ENCODE measurements at regions of chr1 and their contacts with region 1.

Region 1: GRCh38 chr1:177928194-177928593 is 41.7 kb downstream of the SEC16B start:
- DNase-seq: no peak
- H3K4me3 ChIP-seq: no peak overlapping the region
- H3K27ac ChIP-seq: no peak overlapping the region
- H3K4me1 ChIP-seq: 0 out of 7 replicates have a peak, but pooled peaks cover 0 to 3% (median 0%) of the 10 kb centered on the region in 4 experiments
- H3K27me3 ChIP-seq: no peaks in the 10 kb centered on the region
- CTCF ChIP-seq: peak; percentile 26 to 58 (median 55)
- EP300 ChIP-seq: no peak
- POLR2A ChIP-seq: no peak
- RAD21 ChIP-seq: peak; percentile 52 to 59

Region 2: GRCh38 chr1:177411381-177411780 is 516.8 kb before region 1 on chr1:
- CTCF ChIA-PET with region 1: no interaction called
- POLR2A ChIA-PET with region 1: no interaction called
- DNase-seq: no peak
- H3K4me3 ChIP-seq: no peak overlapping the region
- H3K27ac ChIP-seq: no peak overlapping the region
- H3K4me1 ChIP-seq: peaks cover 0 to 2% (median 0%) of the 10 kb centered on the region in 4 experiments; a peak in 2 of 7 replicates
- H3K27me3 ChIP-seq: no peaks in the 10 kb centered on the region
- CTCF ChIP-seq: no peak
- EP300 ChIP-seq: no peak
- POLR2A ChIP-seq: no peak
- RAD21 ChIP-seq: no peak

Region 3: DNA sequence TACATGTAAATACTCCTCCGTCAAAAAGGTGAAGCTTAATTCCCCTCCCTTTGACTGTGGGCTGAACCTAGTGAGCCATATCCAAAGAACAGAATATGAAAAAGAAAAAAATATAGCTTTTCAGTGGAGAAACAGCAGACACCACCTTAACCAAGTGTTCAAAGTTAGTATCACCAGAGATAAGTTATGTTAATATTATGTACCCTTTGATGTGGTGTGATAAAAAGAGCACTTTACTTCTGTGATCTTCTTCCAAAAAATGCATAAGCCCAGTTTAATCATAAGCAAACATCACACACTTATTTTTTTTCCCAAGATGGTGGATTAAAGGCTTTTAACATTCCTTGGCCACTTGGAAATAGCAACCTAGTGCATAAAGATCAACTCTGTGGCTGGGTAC is 37.7 kb before region 1 on chr1:
- CTCF ChIA-PET with region 1: no interaction called
- POLR2A ChIA-PET with region 1: no interaction called
- DNase-seq: no peak
- H3K4me3 ChIP-seq: no peak overlapping the region
- H3K27ac ChIP-seq: no peak overlapping the region
- H3K4me1 ChIP-seq: no peaks in the 10 kb centered on the region
- H3K27me3 ChIP-seq: no peaks in the 10 kb centered on the region
- CTCF ChIP-seq: no peak
- EP300 ChIP-seq: no peak
- POLR2A ChIP-seq: no peak
- RAD21 ChIP-seq: no peak

Region 4: DNA sequence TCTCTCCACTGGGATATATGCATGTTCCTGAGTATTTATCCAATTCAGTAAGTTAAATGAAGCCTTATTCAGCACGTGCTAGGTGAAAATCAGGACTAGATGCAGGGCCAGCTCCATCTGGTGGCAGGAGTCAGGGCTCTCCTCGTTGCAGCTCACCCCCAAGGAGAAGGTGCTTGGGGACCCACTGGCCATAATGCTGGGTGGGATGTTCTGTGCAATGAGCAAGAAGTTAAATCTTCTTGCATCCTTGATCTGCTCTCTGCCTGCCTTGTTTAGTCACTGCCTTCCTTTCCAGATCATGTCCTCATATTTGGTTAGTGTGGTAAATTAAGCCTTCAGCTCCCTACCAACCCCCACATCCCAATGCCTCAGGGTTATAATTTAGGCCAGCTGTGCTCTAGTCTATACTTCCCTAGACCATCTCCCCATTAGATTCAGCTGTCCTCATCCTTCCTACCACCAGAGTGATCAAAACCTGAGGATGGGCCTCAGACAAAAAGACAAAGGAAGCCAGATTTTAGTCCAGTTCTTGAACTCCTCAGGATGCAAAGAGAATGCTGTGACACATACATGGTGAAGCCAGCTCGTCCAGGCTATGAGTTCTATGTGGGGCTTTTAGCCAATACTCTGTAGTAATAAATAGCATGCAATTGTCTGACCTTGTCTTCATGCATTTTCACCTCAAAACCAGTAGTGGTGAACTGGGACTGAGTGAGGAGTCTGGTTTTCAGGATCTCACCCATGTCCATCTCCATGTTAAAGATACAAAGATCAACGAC is 14.2 kb before region 1 on chr1:
- CTCF ChIA-PET with region 1: interaction called, 52 read pairs
- POLR2A ChIA-PET with region 1: no interaction called
- DNase-seq: peak in 1 of 2 experiments; percentile 57
- H3K4me3 ChIP-seq: no peak overlapping the region
- H3K27ac ChIP-seq: no peak overlapping the region
- H3K4me1 ChIP-seq: no peaks in the 10 kb centered on the region
- H3K27me3 ChIP-seq: no peaks in the 10 kb centered on the region; a peak in 1 of 7 replicates
- CTCF ChIP-seq: peak; percentile 69 to 84 (median 81)
- EP300 ChIP-seq: no peak
- POLR2A ChIP-seq: no peak
- RAD21 ChIP-seq: peak; percentile 84 to 85

Region 5: DNA sequence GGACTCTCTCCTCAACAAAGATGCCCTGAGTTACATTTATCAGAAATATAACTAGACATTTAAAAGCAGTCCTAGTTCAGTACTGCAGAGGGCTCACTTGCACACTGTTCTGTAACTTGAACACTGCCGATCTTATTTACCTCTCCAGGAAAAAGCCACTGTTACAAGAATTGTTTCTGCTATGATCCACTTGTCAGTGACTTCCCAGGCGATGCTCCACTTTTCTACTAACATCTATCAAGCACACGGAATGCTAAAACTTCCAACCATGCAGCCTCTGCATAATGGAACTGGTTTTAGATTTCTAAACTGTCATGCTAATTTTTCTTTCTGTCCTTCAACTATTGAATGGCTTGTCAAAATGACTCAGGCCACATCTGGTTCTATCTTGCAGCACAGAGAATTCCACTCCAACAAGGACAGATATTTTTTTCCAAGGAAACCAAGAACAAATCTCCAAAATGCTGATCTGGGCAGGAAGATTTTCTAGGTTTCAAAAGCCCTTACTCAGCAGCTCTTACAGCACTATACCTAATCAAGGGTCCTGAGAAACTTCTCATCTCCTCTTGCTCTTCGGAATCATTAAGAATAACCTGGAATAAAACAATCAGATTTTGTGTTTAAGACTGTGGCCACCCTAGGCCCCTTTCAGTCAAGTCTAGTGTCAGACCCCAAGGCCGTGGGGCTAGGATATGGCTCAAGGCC is 31.8 kb after region 1 on chr1:
- CTCF ChIA-PET with region 1: no interaction called
- POLR2A ChIA-PET with region 1: no interaction called
- DNase-seq: no peak
- H3K4me3 ChIP-seq: no peak overlapping the region; a peak in 1 of 8 replicates
- H3K27ac ChIP-seq: no peak overlapping the region
- H3K4me1 ChIP-seq: peaks cover 0 to 10% (median 2%) of the 10 kb centered on the region in 4 experiments; a peak in 6 of 7 replicates
- H3K27me3 ChIP-seq: no peaks in the 10 kb centered on the region
- CTCF ChIP-seq: no peak
- EP300 ChIP-seq: no peak
- POLR2A ChIP-seq: no peak
- RAD21 ChIP-seq: no peak; a peak in 1 of 4 replicates

Region 6: DNA sequence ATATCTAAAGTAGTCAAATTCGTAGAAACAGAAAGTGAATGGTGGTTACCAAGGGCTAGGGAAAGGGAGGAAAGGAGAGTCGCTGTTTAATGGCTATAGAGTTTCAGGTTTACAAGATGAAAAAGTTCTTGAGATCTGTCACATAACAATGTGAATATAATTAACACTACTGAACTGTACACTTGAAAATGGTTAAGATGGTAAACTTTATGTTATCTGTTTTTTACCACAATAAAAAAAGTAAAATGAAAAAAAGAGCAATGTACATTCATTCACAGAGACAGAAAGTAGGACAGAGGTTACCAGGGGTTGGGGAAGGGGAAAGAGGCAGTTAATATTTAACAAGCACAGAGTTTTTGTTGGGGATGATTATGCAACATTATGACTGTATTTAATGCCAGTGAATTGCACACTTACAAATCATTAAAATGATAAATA is 95.0 kb after region 1 on chr1:
- CTCF ChIA-PET with region 1: no interaction called
- POLR2A ChIA-PET with region 1: no interaction called
- DNase-seq: no peak
- H3K4me3 ChIP-seq: no peak overlapping the region
- H3K27ac ChIP-seq: no peak overlapping the region
- H3K4me1 ChIP-seq: no peaks in the 10 kb centered on the region
- H3K27me3 ChIP-seq: no peaks in the 10 kb centered on the region
- CTCF ChIP-seq: no peak
- EP300 ChIP-seq: no peak
- POLR2A ChIP-seq: no peak
- RAD21 ChIP-seq: no peak